ENCODE measurements at regions of chr11 and their contacts with region 1.

Region 1: GRCh38 chr11:63768237-63769043 is at the start of gene ZFTA:
- DNase-seq: peak; percentile 87
- H3K4me3 ChIP-seq: peak within 1 kb of the TSS; percentile 72 to 95 (median 90)
- H3K27ac ChIP-seq: peak within 1 kb of the TSS; percentile 86 to 94 (median 91)
- H3K4me1 ChIP-seq: peaks cover 0 to 54% (median 48%) of the 10 kb centered on the region in 4 donors
- H3K27me3 ChIP-seq: no peaks in the 10 kb centered on the region
- CTCF ChIP-seq: peak in 1 of 4 experiments; percentile 67
- EP300 ChIP-seq: no peak
- POLR2A ChIP-seq: no peak
- total RNA-seq, gene ZFTA: 11.1 to 20.4 (median 13.6) TPM

Region 2: DNA sequence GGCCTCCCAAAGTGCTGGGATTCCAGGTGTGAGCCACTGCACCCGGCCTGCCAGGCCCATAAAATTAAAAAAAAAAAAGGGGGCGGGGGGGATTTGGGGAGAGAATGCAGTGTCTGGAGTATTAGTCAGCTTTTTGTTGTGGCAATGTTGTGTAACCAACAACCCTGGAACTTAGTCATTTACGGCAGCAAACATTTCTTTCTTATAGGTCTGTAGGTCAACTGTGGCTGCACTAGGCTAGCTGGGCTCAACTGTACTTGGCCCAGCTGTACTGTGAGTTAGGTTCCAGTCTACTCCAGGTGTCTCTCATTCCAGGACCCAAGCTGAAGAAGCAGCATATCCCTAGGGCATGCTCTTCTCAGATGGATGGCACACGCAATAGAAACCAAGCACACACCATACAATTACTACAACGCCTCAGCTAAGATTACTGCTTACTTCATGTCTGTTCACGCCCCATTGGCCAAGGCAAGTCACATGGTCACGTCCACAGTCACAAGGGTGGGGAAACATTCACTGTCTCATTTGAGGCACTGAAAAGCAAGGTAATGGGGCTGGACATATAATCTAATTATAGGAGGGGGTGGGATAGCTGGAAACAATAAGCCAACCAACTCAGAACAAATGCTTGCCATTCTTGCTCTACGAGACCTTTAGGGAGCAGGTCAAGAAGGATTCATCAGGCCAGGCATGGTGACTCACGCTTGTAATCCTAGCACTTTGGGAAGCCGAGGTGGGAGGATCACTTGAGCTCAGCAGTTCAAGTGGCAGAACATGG is 34.4 kb after region 1 on chr11:
- intact Hi-C with region 1: no loop called
- DNase-seq: no peak
- H3K4me3 ChIP-seq: no peak overlapping the region
- H3K27ac ChIP-seq: no peak overlapping the region
- H3K4me1 ChIP-seq: no peaks in the 10 kb centered on the region
- H3K27me3 ChIP-seq: no peaks in the 10 kb centered on the region
- CTCF ChIP-seq: no peak
- EP300 ChIP-seq: no peak
- POLR2A ChIP-seq: no peak

Region 3: DNA sequence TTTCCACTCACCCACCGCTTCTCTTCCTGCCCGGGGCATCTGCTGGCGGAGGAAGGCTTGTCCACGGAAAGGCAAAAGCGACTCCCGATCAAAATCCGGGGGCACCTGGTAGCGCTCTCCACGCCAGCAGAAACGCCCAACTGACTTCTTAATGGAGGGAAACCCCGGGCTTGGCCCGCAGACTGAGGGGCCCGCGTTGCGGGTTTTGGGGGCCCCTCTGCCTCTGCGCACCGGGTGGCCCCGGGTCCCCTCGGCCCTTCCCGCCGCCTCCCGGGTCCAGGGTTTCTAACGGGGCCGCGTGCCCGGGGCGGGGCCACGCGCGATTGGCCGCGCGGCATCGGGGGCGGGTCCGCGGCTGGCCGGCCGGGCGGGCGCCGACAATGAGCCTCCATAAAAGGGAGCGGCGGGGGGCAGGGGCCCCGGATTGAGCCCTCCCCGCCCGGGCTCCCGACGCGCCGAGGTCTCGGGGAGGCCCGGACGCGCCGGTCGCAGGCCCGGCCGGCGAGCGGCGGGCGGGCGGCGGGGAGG is 44.7 kb after region 1 on chr11 and contains the start of gene SPINDOC:
- intact Hi-C with region 1: loop called (anchors 1 kb)
- DNase-seq: peak; percentile 90
- H3K4me3 ChIP-seq: peak within 1 kb of the TSS; percentile 92 to 98 (median 94)
- H3K27ac ChIP-seq: peak within 1 kb of the TSS; percentile 83 to 95 (median 91)
- H3K4me1 ChIP-seq: peaks cover 0 to 32% (median 27%) of the 10 kb centered on the region in 4 donors
- H3K27me3 ChIP-seq: no peaks in the 10 kb centered on the region
- CTCF ChIP-seq: no peak
- EP300 ChIP-seq: no peak
- POLR2A ChIP-seq: no peak
- total RNA-seq, gene SPINDOC: 12.2 to 15.2 (median 14.1) TPM

Region 4: DNA sequence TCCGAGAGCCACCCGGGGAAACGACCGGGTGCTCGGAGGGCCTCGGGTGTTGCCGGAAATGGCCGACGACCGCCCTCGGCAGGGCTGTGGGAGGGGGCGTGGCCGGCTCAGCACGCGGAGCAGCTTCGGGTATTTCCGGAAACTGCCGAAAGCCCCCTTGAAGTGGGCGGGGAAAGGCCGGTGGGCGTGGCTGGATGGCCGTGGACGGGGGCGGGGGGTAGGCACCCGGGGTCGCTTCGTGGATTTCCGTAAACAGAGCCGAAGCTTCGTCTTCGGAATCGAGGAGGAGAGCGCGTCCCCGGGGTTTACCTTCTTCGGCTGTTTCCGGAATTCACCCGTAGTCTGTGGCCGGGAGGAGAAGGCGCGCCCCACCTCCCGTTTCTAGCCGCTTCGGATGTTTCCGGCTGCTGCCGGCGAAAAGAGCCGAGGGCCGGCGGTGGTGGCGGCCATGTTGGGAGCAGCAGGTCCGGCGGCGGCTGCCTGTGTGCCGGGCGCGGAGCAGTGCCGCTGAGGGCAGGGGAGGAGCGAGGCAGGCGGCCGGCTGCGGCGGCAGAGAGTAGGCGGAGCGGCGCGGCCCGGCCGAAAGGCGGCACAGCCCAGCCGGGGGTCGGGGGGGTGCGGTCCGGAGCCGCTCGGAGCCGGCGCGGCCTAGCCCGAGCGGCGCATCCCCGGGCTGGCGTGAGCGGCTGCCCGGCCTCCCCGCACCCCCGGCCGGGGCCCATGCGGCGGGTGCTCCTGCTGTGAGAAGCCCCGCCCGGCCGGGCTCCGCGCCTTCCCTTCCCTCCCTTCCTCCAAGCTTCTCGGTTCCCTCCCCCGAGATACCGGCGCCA is 70.5 kb after region 1 on chr11 and contains the start of gene MARK2:
- intact Hi-C with region 1: loop called (anchors 2 kb)
- DNase-seq: peak; percentile 99
- H3K4me3 ChIP-seq: peak within 1 kb of the TSS; percentile 71 to 95 (median 88)
- H3K27ac ChIP-seq: peak within 1 kb of the TSS; percentile 83 to 92 (median 87)
- H3K4me1 ChIP-seq: peaks cover 0 to 51% (median 48%) of the 10 kb centered on the region in 4 donors
- H3K27me3 ChIP-seq: no peaks in the 10 kb centered on the region
- CTCF ChIP-seq: no peak
- EP300 ChIP-seq: no peak
- POLR2A ChIP-seq: peak in 1 of 2 donors; percentile 35
- total RNA-seq, gene MARK2: 14.3 to 24.6 (median 18.2) TPM

Region 5: DNA sequence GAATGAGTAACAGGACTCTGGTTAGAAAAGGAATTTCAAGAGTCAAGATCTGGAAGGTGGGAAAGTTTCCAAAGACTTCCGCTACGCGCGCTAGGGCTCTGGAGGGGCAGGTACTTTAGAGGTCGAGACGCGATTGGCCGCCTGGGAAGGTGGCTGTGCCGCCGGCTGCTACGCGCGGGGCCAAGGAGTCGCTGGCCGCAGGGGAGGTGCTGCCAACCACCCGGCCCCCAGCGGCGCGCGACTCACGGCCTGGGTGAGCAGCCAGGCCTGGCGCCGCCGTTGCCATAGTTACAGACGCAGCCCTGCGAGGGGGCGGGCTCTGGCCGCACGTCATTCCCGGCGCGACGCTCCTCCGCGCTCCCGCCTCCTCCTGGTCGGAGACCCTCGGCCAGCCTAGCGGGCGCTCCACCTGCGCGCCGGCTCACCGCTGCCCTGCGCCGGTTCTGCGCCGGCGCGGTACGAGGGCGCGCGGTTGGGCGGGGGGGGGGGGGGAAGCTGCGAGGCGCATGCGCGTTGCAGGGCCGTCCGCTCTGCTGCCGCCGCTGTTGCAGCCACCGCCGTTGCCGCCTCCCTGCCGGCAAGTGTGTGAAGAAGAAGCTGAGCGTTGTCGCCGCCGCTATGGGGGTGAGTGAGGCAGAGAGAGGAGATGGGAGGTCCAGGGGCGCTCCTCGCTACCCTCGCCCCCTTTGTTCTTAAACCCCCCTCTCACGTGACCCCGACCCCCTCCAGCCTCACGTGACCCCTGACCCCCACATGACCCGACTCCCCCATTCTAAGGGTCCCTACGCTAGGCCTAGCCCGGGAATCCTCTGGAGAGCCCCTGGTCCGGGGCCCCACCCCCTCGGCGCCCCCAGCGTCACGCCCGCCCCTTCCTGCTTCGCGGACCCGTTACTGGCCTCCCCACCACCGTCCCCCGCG is 170.3 kb after region 1 on chr11 and contains the start of gene NAA40:
- intact Hi-C with region 1: loop called (anchors 2 kb)
- DNase-seq: peak; percentile 92
- H3K4me3 ChIP-seq: peak within 1 kb of the TSS; percentile 51 to 83 (median 68)
- H3K27ac ChIP-seq: peak within 1 kb of the TSS; percentile 67 to 76 (median 74)
- H3K4me1 ChIP-seq: peaks cover 0 to 24% (median 14%) of the 10 kb centered on the region in 4 donors
- H3K27me3 ChIP-seq: no peaks in the 10 kb centered on the region
- CTCF ChIP-seq: no peak
- EP300 ChIP-seq: no peak
- POLR2A ChIP-seq: no peak
- total RNA-seq, gene NAA40: 5.4 to 18.0 (median 6.8) TPM

Measured in sigmoid colon (tissue), 7 donors.